PC-3 (cell line): ENCODE measurements at regions of chr3 and their contacts with region 1.

Region 1: GRCh38 chr3:17605032-17605431 is 137.4 kb downstream of the TBC1D5 start:
- DNase-seq: peak; percentile 92
- ATAC-seq: peak; percentile 93
- H3K4me3 ChIP-seq: no peak overlapping the region
- H3K27ac ChIP-seq: peak overlapping the region; percentile 38
- H3K4me1 ChIP-seq: peaks cover 25% of the 10 kb centered on the region
- H3K27me3 ChIP-seq: no peaks in the 10 kb centered on the region
- CTCF ChIP-seq: no peak

Region 2: DNA sequence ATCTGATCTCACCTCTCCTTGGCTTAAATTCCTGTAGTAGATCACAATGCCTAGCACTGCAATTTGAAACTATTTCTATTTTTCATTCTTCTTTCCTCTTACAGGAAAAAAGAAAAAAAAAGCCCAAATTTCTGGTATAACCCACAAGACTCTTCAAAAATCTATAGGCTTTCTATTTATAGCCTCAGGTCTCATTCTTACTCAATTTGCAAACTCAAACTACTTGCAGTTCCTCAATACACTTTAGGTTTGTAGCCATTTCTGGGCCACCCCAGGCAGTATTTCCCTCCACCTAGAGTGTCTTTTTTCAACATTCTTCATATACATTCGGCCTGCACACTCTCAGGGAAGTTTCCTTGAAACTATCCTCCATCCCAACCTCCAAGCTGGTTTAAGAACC is 31.6 kb before region 1 on chr3:
- CTCF ChIA-PET with region 1: no interaction called
- POLR2A ChIA-PET with region 1: no interaction called
- intact Hi-C with region 1: loop called (anchors 5 kb)
- DNase-seq: no peak
- ATAC-seq: no peak
- H3K4me3 ChIP-seq: no peak overlapping the region
- H3K27ac ChIP-seq: no peak overlapping the region
- H3K4me1 ChIP-seq: no peaks in the 10 kb centered on the region
- H3K27me3 ChIP-seq: no peaks in the 10 kb centered on the region
- CTCF ChIP-seq: no peak

Region 3: GRCh38 chr3:17639765-17640164 is 34.7 kb after region 1 on chr3:
- CTCF ChIA-PET with region 1: no interaction called
- POLR2A ChIA-PET with region 1: no interaction called
- intact Hi-C with region 1: loop called (anchors 5 kb)
- DNase-seq: peak; percentile 80
- ATAC-seq: peak; percentile 34
- H3K4me3 ChIP-seq: no peak overlapping the region
- H3K27ac ChIP-seq: peak overlapping the region; percentile 48
- H3K4me1 ChIP-seq: peaks cover 33% of the 10 kb centered on the region
- H3K27me3 ChIP-seq: no peaks in the 10 kb centered on the region
- CTCF ChIP-seq: no peak

Region 4: GRCh38 chr3:17678116-17678741 is 73.2 kb after region 1 on chr3:
- CTCF ChIA-PET with region 1: no interaction called
- POLR2A ChIA-PET with region 1: no interaction called
- intact Hi-C with region 1: no loop called
- DNase-seq: no peak
- ATAC-seq: no peak; the same call in 1 of the 2 replicates
- H3K4me3 ChIP-seq: no peak overlapping the region
- H3K27ac ChIP-seq: no peak overlapping the region
- H3K4me1 ChIP-seq: no peaks in the 10 kb centered on the region; the same call in 1 of the 2 replicates
- H3K27me3 ChIP-seq: no peaks in the 10 kb centered on the region
- CTCF ChIP-seq: no peak